ENCODE measurements at regions of chr4 and their contacts with region 1.

Region 1: DNA sequence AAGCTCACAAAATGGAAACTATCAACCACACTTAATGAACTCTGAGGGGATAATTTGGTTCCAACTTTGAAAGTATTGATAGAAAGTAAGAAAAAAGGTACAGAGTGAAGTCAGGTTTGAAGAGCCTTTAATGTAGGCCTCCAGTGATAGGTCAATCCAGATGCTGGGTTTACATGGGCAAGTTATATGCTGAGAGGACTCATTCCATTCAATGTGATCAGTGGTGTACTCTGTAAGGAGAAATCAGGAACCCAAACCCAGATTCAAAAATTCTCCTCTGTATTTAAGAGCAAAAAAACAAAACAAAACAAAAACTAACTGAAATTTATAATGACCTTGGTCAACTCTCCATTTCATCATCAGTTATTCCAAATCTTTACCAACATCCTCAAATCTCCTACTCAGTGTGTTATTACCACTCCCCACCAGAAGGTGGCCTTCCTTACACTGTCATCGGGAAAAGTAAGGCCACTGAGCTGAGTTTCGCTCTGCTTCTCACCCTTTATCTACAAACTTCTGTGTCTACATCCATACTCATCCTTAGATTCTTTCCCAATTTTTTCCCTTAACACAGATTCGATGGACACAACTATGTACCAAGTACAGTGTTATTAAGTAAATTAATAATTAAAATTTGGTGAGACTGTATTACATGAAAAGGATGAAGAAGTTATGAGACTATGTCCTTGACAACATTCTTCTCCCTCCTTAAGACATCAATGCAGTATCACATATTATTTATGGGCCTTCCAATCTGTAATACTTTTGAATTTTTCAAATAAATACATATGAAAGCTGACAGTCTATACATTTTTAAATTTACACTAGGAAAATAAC is 88.3 kb downstream of the ZAR1 start:
- DNase-seq: no peak
- H3K4me3 ChIP-seq: no peak overlapping the region
- H3K27ac ChIP-seq: no peak overlapping the region
- H3K4me1 ChIP-seq: no peaks in the 10 kb centered on the region
- H3K27me3 ChIP-seq: no peaks in the 10 kb centered on the region
- CTCF ChIP-seq: peak; percentile 84 to 87 (median 86)
- EP300 ChIP-seq: no peak
- POLR2A ChIP-seq: no peak

Region 2: GRCh38 chr4:47631161-47631560 is 947.2 kb before region 1 on chr4:
- intact Hi-C with region 1: no loop called
- DNase-seq: no peak
- H3K4me3 ChIP-seq: no peak overlapping the region
- H3K27ac ChIP-seq: peak overlapping the region in 2 of 4 donors; percentile 13 to 37
- H3K4me1 ChIP-seq: peaks cover 0 to 5% (median 0%) of the 10 kb centered on the region in 4 donors
- H3K27me3 ChIP-seq: no peaks in the 10 kb centered on the region
- CTCF ChIP-seq: no peak
- EP300 ChIP-seq: no peak
- POLR2A ChIP-seq: no peak

Region 3: DNA sequence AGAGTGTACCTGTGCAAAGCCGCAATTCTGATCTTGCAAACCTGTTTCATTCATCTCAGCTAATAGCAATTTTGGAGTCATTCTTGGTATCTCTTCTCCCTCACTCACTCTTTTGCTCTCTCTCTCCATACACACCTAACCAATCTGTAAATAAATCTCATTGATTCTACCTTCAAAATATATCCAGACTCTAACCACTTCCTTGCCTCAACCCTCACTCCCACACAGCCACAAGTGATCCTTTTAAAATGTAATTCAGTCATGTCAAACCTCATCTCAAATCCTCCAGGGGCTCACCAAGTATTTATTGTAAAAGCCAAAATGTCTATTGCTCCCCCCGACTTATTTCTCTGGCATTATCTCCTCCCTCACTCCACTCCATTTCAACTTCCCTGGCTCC is 146.9 kb before region 1 on chr4:
- intact Hi-C with region 1: no loop called
- DNase-seq: no peak
- H3K4me3 ChIP-seq: no peak overlapping the region
- H3K27ac ChIP-seq: no peak overlapping the region
- H3K4me1 ChIP-seq: no peaks in the 10 kb centered on the region
- H3K27me3 ChIP-seq: no peaks in the 10 kb centered on the region
- CTCF ChIP-seq: no peak
- EP300 ChIP-seq: no peak
- POLR2A ChIP-seq: no peak

Region 4: DNA sequence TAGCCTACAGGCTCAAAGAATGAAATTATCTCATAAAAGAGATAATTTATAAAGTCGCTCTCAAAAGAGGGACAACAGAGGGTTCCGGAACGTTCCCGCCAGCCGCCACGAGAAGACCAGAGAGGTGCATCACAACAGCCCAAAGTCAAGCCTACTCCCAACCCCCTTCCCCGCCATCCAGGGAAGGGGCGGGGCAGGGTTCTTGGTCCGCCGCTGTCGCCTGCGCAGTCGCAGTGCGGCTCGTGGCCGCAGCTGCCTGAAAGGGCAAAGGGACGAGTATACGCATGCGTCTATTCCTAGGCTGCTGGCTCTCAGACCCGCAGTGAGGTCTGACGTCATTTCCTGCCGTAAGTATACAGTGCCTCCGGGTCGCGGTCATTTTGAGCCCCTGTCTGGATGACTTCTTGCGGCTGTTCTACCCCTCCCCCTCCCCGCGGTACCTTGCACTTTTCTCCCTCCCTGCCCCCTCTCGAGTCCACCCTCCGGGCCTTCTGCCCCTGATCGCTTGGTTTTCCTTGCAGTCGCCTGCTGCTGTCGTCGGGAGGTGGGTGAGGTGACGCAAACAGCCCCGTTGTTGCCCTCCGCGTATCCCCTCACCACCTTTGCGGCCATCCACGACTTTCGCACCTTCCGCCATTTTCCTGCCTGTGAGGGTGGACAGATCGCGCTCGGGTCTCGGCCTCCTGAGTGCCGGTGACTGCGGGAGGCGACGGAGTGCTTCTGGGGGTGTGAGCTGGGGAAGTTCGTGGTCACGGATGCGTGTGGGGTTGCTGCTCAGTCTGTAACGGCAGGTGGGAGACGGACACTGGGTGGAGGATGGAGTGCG is 252.6 kb after region 1 on chr4 and contains the start of gene OCIAD1:
- intact Hi-C with region 1: loop called (anchors 5 kb)
- DNase-seq: peak; percentile 98
- H3K4me3 ChIP-seq: peak within 1 kb of the TSS; percentile 79 to 96 (median 86)
- H3K27ac ChIP-seq: peak within 1 kb of the TSS; percentile 91 to 93 (median 91)
- H3K4me1 ChIP-seq: peaks cover 16 to 32% (median 22%) of the 10 kb centered on the region in 4 donors
- H3K27me3 ChIP-seq: peaks cover 0 to 2% (median 0%) of the 10 kb centered on the region in 4 donors
- CTCF ChIP-seq: no peak
- EP300 ChIP-seq: no peak
- POLR2A ChIP-seq: no peak
- total RNA-seq, gene OCIAD1: 73.7 to 95.8 (median 78.9) TPM

Region 5: GRCh38 chr4:48906206-48907173 is 328.1 kb after region 1 on chr4 and contains the start of gene OCIAD2:
- intact Hi-C with region 1: loop called (anchors 5 kb)
- DNase-seq: no peak
- H3K4me3 ChIP-seq: peak within 1 kb of the TSS; percentile 63 to 78 (median 71)
- H3K27ac ChIP-seq: no peak within 1 kb of the TSS
- H3K4me1 ChIP-seq: peaks cover 6 to 19% (median 14%) of the 10 kb centered on the region in 4 donors
- H3K27me3 ChIP-seq: no peaks in the 10 kb centered on the region
- CTCF ChIP-seq: peak in 2 of 3 experiments; percentile 10 to 23
- EP300 ChIP-seq: no peak
- POLR2A ChIP-seq: no peak
- total RNA-seq, gene OCIAD2: 3.3 to 9.5 (median 7.9) TPM

Region 6: GRCh38 chr4:48963042-48963679 is 384.8 kb after region 1 on chr4:
- intact Hi-C with region 1: loop called (anchors 2 kb)
- DNase-seq: peak; percentile 92
- H3K4me3 ChIP-seq: no peak overlapping the region
- H3K27ac ChIP-seq: no peak overlapping the region
- H3K4me1 ChIP-seq: no peaks in the 10 kb centered on the region
- H3K27me3 ChIP-seq: no peaks in the 10 kb centered on the region
- CTCF ChIP-seq: peak; percentile 90 to 93 (median 90)
- EP300 ChIP-seq: no peak
- POLR2A ChIP-seq: no peak

Measured in esophagus muscularis mucosa (tissue), 4 donors.